PC-9 (cell line): ENCODE measurements at regions of chr22 and their contacts with region 1.

Region 1: GRCh38 chr22:24768537-24769374 is 5.8 kb downstream of the PIWIL3 start:
- DNase-seq: peak; percentile 43 to 48
- H3K4me3 ChIP-seq: no peak overlapping the region
- H3K27ac ChIP-seq: no peak overlapping the region
- H3K4me1 ChIP-seq: no peaks in the 10 kb centered on the region
- H3K27me3 ChIP-seq: 0 out of 2 replicates have a peak, but pooled peaks cover 4% of the 10 kb centered on the region
- CTCF ChIP-seq: peak; percentile 75

Region 2: DNA sequence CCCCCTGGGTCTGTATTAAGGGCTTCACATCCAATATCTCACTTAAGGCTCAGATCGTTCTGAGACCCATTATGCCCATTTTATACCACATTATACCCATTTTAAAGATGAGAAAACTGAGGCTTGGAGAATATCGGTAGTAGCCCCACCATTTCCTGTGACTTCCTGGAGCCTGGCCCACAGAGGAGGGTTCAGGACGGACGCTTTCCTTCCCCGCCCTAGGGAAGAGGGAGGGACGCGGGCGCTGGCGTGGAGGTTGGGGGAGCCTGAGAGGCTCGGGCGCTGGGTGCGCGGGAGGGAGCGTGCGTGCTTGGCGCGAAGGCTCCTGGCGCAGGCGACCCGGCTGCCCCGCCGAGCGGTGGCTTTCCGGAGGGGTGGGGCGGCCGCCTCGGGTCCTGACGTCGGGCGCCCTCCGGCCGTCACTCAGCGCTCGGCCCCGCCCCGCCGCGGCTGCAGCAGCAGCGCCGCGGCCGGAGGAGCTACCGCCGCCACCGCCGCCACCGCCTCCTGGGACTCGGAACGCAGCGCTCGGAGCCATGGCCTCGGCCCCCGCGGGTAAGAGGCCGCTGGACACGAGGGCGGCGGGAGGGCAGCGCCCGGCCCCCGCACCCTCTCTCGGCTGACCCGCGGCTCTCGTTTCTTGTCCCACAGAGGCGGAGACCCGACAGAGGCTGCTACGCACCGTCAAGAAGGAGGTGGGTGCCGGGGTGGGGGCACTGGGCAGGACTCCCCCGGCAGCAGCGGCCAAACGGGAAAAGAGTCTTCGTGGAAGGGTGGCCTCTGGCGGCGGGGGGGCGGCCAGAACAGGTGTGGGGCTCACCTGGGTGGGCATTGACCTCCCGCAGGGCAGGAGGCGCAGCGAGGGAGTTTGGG is 37.3 kb after region 1 on chr22 and contains the start of gene SGSM1:
- CTCF ChIA-PET with region 1: interaction called, 10 read pairs
- POLR2A ChIA-PET with region 1: no interaction called
- intact Hi-C with region 1: loop called (anchors 2 kb)
- DNase-seq: peak; percentile 59 to 68
- H3K4me3 ChIP-seq: peak within 1 kb of the TSS; percentile 63; the same call in 1 of the 2 replicates
- H3K27ac ChIP-seq: no peak within 1 kb of the TSS
- H3K4me1 ChIP-seq: no peaks in the 10 kb centered on the region
- H3K27me3 ChIP-seq: peaks cover 21% of the 10 kb centered on the region
- CTCF ChIP-seq: no peak
- total RNA-seq, gene SGSM1: 0.08 and 0.48 TPM in 2 replicates

Region 3: DNA sequence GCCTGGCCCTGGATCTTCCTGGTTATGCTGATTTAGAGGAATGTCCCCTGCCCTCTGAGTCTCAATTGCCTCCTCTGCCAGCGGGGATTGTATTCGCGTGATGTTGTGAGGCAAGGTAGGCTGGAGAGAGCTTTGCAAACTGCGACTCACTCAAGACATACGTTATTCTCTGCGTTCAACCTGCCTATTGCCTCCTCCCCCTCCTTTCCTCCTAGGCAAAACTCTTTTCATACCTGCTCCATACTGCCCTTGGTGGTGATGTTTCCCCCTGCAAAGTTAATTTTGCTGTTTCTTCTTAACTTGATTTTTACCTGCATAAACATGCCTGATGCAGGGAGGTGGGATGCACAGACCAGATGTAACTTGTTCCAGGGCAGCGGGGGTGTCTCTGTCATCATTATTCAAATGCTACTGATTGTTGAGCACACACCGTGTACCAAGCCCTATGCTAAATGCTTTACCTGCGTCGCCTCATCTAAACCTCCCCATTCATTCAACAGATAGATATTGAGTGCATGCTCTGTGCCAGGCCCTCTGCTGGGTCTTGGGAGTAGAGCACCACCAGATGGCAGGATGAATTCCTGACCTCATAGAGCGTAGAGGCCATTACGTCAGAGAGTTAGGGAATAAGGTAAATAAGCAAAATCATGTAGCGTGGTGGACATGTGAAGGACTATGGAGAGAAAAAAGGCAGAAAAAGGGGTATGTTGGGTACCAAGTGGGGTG is 66.3 kb after region 1 on chr22:
- CTCF ChIA-PET with region 1: no interaction called
- POLR2A ChIA-PET with region 1: no interaction called
- intact Hi-C with region 1: loop called (anchors 5 kb)
- DNase-seq: no peak
- H3K4me3 ChIP-seq: no peak overlapping the region
- H3K27ac ChIP-seq: no peak overlapping the region
- H3K4me1 ChIP-seq: no peaks in the 10 kb centered on the region
- H3K27me3 ChIP-seq: 0 out of 2 replicates have a peak, but pooled peaks cover 16% of the 10 kb centered on the region
- CTCF ChIP-seq: peak; percentile 54; the same call in 1 of the 2 replicates

Region 4: DNA sequence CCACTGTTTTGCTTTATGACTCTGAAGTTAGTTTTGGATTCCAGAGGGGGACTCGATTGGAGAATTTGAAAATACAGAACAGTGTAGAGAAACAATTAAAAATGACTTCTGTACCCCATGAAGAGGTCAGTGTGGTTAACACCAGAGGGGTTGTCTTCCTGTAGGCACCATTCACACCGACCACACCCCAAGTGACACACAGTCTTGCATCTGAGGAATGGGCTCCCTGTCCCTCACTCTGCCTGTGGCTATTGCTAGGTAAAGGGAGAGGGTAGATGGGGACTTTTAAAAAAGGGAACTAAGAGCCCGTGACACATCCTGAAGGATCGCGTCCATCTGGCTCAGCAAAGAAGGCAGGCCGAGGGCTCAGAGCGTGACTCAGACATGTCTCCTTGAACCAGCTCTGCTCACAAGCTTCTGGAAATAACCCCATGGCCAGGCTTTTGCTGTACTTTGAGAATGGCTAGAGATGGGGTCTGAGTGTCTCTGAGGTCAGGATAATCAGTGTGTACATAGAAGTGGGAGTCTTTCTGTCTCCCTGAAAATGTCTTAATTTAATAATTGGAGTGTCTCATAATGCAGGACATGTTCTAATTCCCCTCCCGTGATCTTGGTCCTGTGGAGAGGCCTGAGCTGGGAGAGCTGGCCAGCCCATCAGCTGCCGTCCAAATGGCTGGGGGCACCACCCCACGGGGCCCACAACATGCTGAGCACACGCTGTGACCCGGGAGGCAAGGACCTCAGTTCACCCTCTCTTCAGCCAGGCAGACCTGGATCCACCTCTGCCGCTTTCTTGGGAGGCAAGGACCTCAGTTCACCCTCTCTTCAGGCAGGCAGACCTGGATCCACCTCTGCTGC is 76.5 kb after region 1 on chr22:
- CTCF ChIA-PET with region 1: interaction called, 9 read pairs
- POLR2A ChIA-PET with region 1: no interaction called
- intact Hi-C with region 1: loop called (anchors 1 kb)
- DNase-seq: peak in 1 of 2 experiments; percentile 53
- H3K4me3 ChIP-seq: no peak overlapping the region
- H3K27ac ChIP-seq: no peak overlapping the region
- H3K4me1 ChIP-seq: no peaks in the 10 kb centered on the region
- H3K27me3 ChIP-seq: no peaks in the 10 kb centered on the region
- CTCF ChIP-seq: no peak

Region 5: GRCh38 chr22:24867323-24868022 is 98.7 kb after region 1 on chr22:
- CTCF ChIA-PET with region 1: no interaction called
- POLR2A ChIA-PET with region 1: no interaction called
- intact Hi-C with region 1: no loop called
- DNase-seq: no peak
- H3K4me3 ChIP-seq: no peak overlapping the region
- H3K27ac ChIP-seq: no peak overlapping the region
- H3K4me1 ChIP-seq: no peaks in the 10 kb centered on the region
- H3K27me3 ChIP-seq: peaks cover 97% of the 10 kb centered on the region
- CTCF ChIP-seq: no peak

Region 6: GRCh38 chr22:25057013-25057881 is 288.5 kb after region 1 on chr22:
- CTCF ChIA-PET with region 1: no interaction called
- POLR2A ChIA-PET with region 1: no interaction called
- intact Hi-C with region 1: loop called (anchors 2 kb)
- DNase-seq: peak in 1 of 2 experiments; percentile 54
- H3K4me3 ChIP-seq: no peak overlapping the region
- H3K27ac ChIP-seq: no peak overlapping the region
- H3K4me1 ChIP-seq: no peaks in the 10 kb centered on the region
- H3K27me3 ChIP-seq: no peaks in the 10 kb centered on the region
- CTCF ChIP-seq: peak; percentile 91

Region 7: DNA sequence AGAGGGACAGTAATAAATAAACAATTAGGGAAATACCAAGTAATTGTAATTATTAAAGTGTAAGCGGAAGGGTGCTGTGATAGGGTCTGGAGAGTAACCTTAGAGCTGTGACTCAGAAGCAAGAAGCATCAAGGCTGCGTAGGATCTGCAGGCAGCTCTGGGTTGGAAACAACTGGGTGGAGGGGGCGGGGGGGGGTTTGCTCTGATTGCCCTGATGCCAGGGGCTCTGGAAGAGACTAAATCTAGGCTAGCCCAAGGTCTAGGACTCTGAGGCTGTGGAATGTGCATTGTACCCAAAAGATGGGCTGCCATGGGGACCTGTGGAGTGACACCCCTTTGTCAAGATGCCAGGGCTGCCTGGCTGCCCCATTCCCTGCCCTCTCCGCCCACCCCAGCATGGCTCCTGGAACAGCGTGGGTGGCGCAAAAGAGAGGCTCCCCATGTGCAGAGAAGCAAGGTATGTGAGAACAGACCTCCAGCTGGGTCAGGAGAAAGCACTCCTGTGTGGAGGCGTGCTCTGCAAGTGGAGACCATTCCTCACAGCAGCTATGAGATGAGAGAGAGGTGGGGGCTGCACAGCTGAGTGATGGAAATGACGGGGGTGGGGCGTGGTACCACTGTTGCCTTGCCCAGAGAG is 329.8 kb after region 1 on chr22:
- CTCF ChIA-PET with region 1: interaction called, 19 read pairs
- POLR2A ChIA-PET with region 1: no interaction called
- intact Hi-C with region 1: no loop called
- DNase-seq: no peak
- H3K4me3 ChIP-seq: no peak overlapping the region
- H3K27ac ChIP-seq: no peak overlapping the region
- H3K4me1 ChIP-seq: no peaks in the 10 kb centered on the region
- H3K27me3 ChIP-seq: no peaks in the 10 kb centered on the region
- CTCF ChIP-seq: no peak